Lower leg skin (tissue), 4 donors: ENCODE measurements at regions of chr4 and their contacts with region 1.

Region 1: DNA sequence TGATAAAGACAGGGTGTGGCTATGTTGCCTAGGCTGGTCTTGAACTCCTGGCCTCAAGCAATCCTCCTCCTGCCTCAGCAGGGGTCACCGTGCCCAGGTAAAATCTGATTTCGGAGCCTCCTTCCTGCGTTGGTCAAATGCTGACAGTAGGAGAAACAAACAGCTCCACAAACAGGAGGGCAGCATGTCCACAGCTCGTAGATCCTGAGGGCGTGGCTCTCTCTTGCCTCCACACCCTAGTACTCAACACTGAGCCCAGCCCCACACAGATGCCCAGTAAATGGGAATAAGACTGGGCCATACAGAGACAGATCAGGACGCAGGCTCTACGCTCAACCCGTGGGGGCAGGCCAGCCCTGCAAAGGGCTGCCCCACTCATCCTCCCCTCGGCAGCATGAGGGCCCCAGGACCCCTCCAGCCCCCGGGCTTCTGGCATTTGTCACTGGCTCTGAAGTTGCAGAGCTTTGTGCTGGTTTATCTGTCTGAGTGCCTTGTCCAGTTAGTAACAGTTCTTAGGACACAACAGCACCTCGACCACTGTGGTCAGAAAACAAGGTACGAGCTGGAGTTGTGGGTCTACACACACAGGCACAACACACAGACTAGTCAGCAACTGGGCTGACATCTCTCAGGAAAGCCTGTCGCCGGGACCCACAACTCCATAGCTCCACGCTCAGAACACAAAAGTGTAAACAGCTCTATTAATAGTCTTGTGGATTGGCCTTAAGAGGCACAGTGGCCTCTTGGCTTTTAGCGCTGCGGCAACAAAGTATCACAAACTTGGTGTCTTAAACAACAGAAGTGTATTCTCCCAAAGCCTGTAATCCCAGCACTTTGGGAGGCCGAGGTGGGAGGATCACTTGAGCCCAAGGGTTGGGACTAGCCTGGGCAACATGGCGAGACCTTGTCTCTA is 5.2 kb downstream of the TNIP2 start:
- DNase-seq: no peak
- H3K4me3 ChIP-seq: no peak overlapping the region
- CTCF ChIP-seq: no peak
- POLR2A ChIP-seq: no peak

Region 2: DNA sequence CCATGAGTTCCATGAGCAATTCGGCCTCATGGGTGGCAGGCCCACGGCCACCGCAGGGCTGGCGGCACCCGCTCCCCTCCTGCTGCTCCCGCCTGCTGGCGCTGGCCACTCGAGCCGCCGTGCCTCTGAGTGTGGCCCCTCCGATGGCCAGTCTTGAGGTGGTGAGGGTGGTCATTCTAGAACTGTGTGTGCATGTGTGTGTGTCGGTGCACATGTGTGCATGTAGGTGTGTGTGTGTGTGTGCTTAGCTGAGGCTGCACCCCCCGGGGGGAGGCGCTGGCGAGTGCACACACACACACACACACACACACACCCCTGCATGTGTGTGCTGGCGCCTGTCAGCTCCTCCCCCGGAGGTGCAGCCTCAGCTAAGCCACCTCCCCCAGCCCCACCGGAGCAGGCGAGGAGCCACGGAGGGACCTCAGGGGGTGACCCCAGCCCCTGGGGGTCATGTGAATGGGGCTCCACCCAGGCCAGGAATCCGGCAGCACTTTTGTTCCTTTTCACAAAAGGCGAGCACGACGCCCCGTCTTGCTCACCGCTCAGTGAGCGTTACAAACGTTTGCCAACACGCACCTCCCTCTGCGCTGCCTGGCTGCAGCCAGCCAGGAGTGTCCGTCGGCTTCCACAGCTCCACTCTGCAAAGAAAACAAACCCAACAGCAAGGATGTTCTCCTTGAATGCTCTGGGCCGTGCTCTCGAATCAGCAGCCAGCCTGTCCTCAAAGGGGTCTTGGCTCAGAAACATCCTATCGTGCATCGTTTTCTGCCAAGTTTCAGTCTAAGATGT is 1709.6 kb before region 1 on chr4:
- intact Hi-C with region 1: no loop called
- DNase-seq: no peak
- H3K4me3 ChIP-seq: no peak overlapping the region
- CTCF ChIP-seq: no peak
- POLR2A ChIP-seq: no peak

Region 3: GRCh38 chr4:1870578-1871443 is 880.1 kb before region 1 on chr4 and contains the start of gene NSD2:
- intact Hi-C with region 1: loop called (anchors 5 kb)
- DNase-seq: peak; percentile 71 to 97
- H3K4me3 ChIP-seq: peak within 1 kb of the TSS; percentile 99
- CTCF ChIP-seq: no peak
- POLR2A ChIP-seq: no peak
- total RNA-seq, gene NSD2: 17.3 to 23.6 (median 19.4) TPM

Region 4: GRCh38 chr4:3399277-3400194 is 648.6 kb after region 1 on chr4:
- intact Hi-C with region 1: no loop called
- DNase-seq: peak in 1 of 2 donors; percentile 43
- H3K4me3 ChIP-seq: no peak overlapping the region
- CTCF ChIP-seq: no peak
- POLR2A ChIP-seq: no peak